A673 (cell line): ENCODE measurements at regions of chr19 and their contacts with region 1.

Region 1: GRCh38 chr19:52139252-52140031 is at the start of gene ZNF616:
- DNase-seq: peak; percentile 96
- H3K4me3 ChIP-seq: peak within 1 kb of the TSS; percentile 82
- H3K27ac ChIP-seq: peak within 1 kb of the TSS; percentile 87
- H3K4me1 ChIP-seq: no peaks in the 10 kb centered on the region
- H3K27me3 ChIP-seq: no peaks in the 10 kb centered on the region
- CTCF ChIP-seq: peak; percentile 81
- total RNA-seq, gene ZNF616: 15.7 and 17.1 TPM in 2 replicates

Region 2: DNA sequence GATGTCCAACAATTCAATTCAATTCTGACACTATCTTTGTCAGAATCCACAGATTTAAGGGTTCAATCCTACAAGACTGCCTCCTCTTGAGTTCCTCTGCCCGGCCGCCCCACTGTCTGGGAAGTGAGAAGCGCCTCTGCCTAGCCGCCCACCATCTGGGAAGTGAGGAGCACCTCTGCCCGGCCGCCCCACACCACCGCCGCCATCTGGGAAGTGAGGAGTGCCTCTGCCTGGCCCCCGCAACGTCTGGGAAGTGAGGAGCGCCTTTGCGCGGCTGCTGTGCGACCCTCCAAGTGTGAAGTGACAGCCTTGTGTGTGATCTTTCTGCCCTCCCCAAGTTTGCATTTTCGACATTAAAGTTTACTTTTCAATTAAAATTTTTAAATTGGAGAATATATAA is 117.2 kb before region 1 on chr19:
- CTCF ChIA-PET with region 1: no interaction called
- POLR2A ChIA-PET with region 1: no interaction called
- intact Hi-C with region 1: no loop called
- DNase-seq: no peak
- H3K4me3 ChIP-seq: no peak overlapping the region
- H3K27ac ChIP-seq: no peak overlapping the region
- H3K4me1 ChIP-seq: no peaks in the 10 kb centered on the region
- H3K27me3 ChIP-seq: no peaks in the 10 kb centered on the region
- CTCF ChIP-seq: no peak

Region 3: DNA sequence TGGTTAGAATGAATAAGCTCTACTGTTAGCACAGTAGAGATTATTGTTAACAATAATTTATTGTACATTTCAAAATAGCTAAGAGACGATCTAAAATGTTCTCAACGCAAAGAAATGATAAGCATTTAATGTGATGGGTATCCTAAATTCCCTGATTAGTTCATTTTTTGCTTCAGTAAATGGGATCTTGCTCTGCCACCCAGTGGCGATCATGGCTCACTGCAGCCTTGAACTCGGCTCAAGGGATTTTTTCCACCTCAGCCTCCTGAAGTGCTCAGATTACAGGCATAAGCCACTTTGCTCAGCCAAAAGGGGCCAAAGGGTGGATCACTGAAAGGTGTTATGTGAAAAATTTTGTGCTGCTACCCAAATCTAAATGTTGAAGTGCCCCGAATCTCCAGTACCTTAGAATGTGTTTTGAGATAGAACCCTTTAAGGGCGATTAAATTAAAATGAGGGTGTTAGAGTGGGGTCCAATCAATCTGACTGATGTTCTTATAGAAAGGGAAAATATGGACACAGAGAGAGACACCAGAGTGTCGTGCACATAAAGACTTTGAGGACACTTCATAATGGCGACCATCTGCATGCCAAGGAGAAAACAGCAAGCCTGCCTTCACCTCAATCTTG is 98.4 kb after region 1 on chr19:
- CTCF ChIA-PET with region 1: no interaction called
- POLR2A ChIA-PET with region 1: no interaction called
- intact Hi-C with region 1: loop called (anchors 1 kb)
- DNase-seq: peak; percentile 66
- H3K4me3 ChIP-seq: no peak overlapping the region
- H3K27ac ChIP-seq: no peak overlapping the region
- H3K4me1 ChIP-seq: no peaks in the 10 kb centered on the region
- H3K27me3 ChIP-seq: no peaks in the 10 kb centered on the region
- CTCF ChIP-seq: peak; percentile 89